Activated CD4-positive, alpha-beta T cell treated with anti-CD3 and anti-CD28 coated beads, Interleukin-2, amount 10 ng/mL, durations not matched to agents 24 days and 14 days (primary cell): ENCODE measurements at regions of chrX and their contacts with region 1.

Region 1: GRCh38 chrX:65985922-65986588 is 53.8 kb downstream of the VSIG4 start:
- DNase-seq: peak; percentile 83
- H3K4me3 Mint-ChIP-seq: no peak overlapping the region
- H3K27ac Mint-ChIP-seq: peak overlapping the region; percentile 81
- H3K4me1 Mint-ChIP-seq: peaks cover 20% of the 10 kb centered on the region
- H3K27me3 Mint-ChIP-seq: no peaks in the 10 kb centered on the region

Region 2: DNA sequence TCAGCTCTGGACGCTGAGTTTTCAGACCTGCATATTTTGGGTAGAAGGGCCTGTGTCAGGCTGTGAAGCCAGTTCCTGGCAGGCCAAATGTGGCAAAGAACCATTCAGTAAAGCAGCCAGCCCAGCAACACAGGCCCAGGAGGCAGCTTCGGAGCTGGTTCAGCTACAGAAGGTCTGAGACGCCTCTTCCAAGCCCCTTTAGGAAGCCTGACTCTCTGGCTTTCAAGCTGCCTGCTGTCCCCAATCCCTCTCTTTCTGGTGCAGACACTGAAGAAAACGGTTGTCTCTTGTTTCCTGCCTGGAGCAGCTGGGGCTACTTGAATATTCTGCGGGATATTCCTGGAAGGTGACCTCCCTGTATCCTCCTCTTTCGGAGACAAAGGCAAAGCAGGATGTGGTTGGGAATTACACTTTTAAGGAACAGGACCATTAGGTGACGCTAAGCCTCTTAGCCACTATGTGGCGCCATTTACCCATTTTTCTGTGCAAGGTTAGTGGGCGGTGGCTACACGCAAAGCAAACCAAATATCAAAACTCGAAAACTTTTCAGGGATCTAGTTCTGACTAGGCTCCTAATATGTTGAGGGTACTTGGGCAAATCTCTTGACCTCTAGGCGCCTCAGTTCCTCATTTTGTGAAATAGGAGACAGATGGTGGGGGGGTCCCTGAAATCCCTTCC is 404.3 kb before region 1 on chrX:
- intact Hi-C with region 1: loop called (anchors 1 kb)
- DNase-seq: peak; percentile 86
- H3K4me3 Mint-ChIP-seq: no peak overlapping the region
- H3K27ac Mint-ChIP-seq: no peak overlapping the region
- H3K4me1 Mint-ChIP-seq: peaks cover 8% of the 10 kb centered on the region
- H3K27me3 Mint-ChIP-seq: no peaks in the 10 kb centered on the region

Region 3: DNA sequence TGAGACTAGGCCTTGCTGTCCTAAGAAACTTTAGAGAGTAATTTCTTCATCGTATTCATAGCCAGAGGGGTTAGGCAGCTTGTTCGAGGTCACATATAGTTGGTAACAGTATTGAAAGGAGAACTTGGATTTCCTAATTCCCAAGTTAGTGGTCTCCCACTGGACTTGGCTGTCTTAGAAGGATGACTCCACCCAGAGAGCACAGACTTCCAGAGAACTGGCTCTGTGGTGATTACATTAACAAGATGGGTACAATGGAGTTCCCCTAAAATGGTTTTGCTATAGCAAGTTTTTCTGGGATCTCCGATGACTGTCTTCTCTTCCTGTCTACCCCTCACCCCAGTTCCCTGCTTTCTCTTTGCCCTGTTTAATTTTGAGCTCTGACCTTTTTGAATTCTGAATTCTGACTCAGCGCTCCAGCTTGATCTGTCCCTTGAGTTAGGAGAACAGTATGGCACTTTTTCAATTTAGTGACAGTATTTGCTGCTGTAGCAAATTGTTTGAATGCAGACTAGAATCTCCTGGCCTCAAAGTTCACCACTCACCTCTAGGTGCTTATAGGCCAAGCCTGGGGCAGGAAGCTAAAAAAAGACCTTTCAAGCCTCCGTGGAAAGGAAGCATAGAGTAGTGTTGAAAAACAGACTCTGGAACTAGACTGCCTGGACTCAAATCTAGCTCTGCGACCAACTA is 311.7 kb before region 1 on chrX:
- intact Hi-C with region 1: loop called (anchors 5 kb)
- DNase-seq: peak; percentile 73
- H3K4me3 Mint-ChIP-seq: peak overlapping the region; percentile 97
- H3K27ac Mint-ChIP-seq: peak overlapping the region; percentile 88
- H3K4me1 Mint-ChIP-seq: peaks cover 58% of the 10 kb centered on the region
- H3K27me3 Mint-ChIP-seq: no peaks in the 10 kb centered on the region

Region 4: DNA sequence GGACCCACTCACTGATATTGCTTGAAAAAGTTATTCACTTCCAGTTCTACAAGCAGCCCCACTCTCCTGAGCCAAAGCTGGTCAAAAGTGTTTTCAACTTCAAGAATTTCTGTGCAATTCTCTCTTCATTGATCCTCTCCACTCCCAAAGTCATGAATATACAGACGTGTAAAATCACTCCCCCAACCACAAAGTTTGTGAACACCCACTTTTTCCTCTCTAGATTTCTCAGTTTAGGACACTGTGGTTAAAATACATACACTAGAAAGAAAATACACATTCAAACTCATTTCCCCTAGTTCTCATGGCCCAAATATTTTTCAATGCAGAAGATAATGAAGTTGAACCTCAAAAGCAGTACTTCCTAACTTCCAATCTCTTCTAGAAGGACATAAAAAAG is 202.3 kb before region 1 on chrX:
- intact Hi-C with region 1: loop called (anchors 5 kb)
- DNase-seq: no peak
- H3K4me3 Mint-ChIP-seq: no peak overlapping the region
- H3K27ac Mint-ChIP-seq: no peak overlapping the region
- H3K4me1 Mint-ChIP-seq: peaks cover 14% of the 10 kb centered on the region
- H3K27me3 Mint-ChIP-seq: no peaks in the 10 kb centered on the region

Region 5: DNA sequence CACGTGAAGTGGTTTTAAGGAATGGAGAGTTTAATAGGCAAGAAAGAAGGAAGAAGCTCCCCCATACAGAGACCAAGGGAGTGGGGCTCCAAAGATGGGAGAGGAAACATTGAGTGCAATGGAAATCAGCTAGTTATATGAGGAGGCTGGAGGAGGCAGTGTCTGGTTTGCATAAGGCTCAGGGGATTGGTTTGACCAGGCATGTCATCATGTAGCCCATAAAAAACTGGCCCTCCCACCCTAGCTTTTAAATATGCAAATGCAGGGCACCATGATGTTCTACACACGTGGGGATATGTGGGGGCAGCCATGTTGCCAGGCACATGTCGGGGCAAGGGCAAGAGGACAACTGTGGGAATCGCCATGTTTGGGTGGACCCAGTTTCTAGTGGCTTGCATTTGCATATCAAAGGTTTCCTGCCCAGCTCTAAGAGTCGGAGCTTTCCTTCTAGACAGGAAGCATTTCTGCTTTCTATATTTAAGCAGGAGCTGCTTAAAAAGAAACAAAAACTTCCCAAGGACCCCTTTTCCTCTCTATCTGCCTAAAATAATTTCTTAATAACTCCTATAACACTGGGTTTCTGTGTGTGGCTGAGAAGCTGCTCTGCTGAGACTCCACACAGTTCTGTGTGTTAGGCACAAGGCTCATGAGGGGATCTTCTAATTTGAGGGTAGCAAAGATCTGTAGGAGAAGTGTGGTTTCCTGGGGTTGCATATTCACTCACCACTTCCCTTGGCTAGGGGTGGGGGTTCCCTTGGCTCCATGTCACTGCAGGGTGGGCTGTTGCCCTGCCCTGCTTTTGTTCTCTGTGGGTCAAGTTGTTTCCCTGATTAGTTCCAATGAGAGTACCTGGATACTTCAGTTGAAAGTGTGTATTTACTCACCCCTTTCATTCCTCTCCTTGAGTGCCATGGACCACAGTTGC is 59.7 kb before region 1 on chrX:
- intact Hi-C with region 1: loop called (anchors 10 kb)
- DNase-seq: peak; percentile 85
- H3K4me3 Mint-ChIP-seq: peak overlapping the region; percentile 48
- H3K27ac Mint-ChIP-seq: peak overlapping the region; percentile 93
- H3K4me1 Mint-ChIP-seq: peaks cover 37% of the 10 kb centered on the region
- H3K27me3 Mint-ChIP-seq: no peaks in the 10 kb centered on the region

Region 6: DNA sequence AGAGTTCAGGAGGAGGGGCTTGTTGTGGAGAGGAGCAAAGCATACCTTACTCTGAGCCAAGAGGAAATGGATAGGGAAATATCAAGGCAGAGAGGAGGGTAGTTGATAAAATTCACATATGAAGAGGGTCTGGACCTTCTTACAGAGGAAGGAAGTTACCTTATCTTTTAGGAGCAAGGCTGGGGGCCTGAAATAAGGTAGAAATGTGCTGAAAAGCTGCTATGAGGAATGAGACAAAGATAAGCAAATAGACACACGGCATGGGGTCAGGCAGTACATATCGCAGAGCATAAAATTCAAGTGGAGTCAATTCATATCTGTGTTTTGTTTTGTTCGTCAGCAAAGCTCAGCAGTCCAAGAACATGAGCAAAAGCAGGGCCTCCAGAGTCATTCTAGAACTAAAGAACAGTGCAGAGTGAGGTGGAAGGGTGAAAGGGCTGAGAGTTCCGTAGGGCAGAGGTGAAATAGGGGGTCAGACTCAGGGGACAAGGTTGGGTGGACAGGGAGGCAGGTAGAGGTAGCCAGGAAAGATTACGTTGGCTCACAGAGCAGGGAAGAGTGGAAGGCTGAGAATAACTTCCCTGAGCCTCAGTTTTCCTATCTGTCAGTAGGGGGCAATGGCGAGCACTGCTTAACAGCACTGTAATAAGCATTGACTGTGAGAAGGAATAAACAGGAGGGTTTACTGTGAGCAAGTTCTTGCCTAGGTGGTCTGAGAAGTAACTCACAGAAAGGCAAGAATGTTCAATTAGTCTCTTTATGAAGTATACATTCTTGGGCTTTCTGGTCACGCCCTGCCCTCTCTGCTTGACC is 44.7 kb after region 1 on chrX:
- intact Hi-C with region 1: loop called (anchors 2 kb)
- DNase-seq: peak; percentile 71
- H3K4me3 Mint-ChIP-seq: no peak overlapping the region
- H3K27ac Mint-ChIP-seq: no peak overlapping the region
- H3K4me1 Mint-ChIP-seq: peaks cover 8% of the 10 kb centered on the region
- H3K27me3 Mint-ChIP-seq: no peaks in the 10 kb centered on the region